ENCODE measurements at regions of chr11 and their contacts with region 1.

Region 1: GRCh38 chr11:7986768-7987559 is at the start of gene EIF3F:
- DNase-seq: peak; percentile 77 to 95 (median 94)
- H3K4me3 ChIP-seq: peak within 1 kb of the TSS; percentile 77
- H3K4me3 Mint-ChIP-seq: peak within 1 kb of the TSS; percentile 76 to 92 (median 92)
- H3K27ac ChIP-seq: peak within 1 kb of the TSS; percentile 65
- H3K27ac Mint-ChIP-seq: peak within 1 kb of the TSS; percentile 79 to 99 (median 98)
- H3K4me1 ChIP-seq: peaks cover 34% of the 10 kb centered on the region
- H3K4me1 Mint-ChIP-seq: peaks cover 47 to 55% (median 54%) of the 10 kb centered on the region in 3 donors
- H3K27me3 ChIP-seq: no peaks in the 10 kb centered on the region
- H3K27me3 Mint-ChIP-seq: peaks cover 0 to 3% of the 10 kb centered on the region in 2 donors
- total RNA-seq, gene EIF3F: 294 to 306 TPM

Region 2: DNA sequence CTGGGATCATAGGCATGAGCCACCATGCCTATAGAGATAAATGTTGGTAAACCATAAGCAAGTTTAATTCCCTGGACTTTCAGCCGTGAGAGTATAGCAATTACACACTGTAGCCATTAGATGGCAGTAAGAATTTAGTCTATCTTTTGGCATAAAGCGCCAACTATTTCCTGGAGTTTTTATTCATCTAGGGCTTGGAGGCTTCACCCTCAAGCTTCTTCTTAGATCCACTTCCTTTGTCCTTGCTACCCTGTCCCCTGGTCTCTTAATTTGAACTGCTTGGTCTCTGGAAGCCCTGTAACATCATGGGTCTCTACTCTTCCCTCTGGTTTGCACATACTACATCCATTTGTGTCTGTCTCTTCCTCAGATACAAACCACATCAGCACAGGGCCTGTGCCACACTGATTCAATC is 94.1 kb before region 1 on chr11:
- CTCF ChIA-PET with region 1: interaction called, 34 read pairs
- POLR2A ChIA-PET with region 1: interaction called, 3 read pairs
- DNase-seq: peak in 2 of 5 donors; percentile 28 to 35
- H3K4me3 ChIP-seq: no peak overlapping the region
- H3K4me3 Mint-ChIP-seq: no peak overlapping the region
- H3K27ac ChIP-seq: no peak overlapping the region
- H3K27ac Mint-ChIP-seq: peak overlapping the region in 3 of 8 donors; percentile 35 to 60 (median 55)
- H3K4me1 ChIP-seq: no peaks in the 10 kb centered on the region
- H3K4me1 Mint-ChIP-seq: peaks cover 4 to 11% (median 6%) of the 10 kb centered on the region in 3 donors
- H3K27me3 ChIP-seq: no peaks in the 10 kb centered on the region
- H3K27me3 Mint-ChIP-seq: peaks cover 0 to 4% of the 10 kb centered on the region in 2 donors

Region 3: GRCh38 chr11:8018484-8019313 is 31.7 kb after region 1 on chr11:
- CTCF ChIA-PET with region 1: interaction called, 19 read pairs
- POLR2A ChIA-PET with region 1: interaction called, 4 read pairs
- DNase-seq: peak; percentile 63 to 91 (median 76)
- H3K4me3 ChIP-seq: peak overlapping the region; percentile 50
- H3K4me3 Mint-ChIP-seq: peak overlapping the region; percentile 72 to 91 (median 83)
- H3K27ac ChIP-seq: peak overlapping the region; percentile 76
- H3K27ac Mint-ChIP-seq: peak overlapping the region; percentile 36 to 97 (median 88)
- H3K4me1 ChIP-seq: peaks cover 12% of the 10 kb centered on the region
- H3K4me1 Mint-ChIP-seq: peaks cover 14 to 15% (median 15%) of the 10 kb centered on the region in 3 donors
- H3K27me3 ChIP-seq: peaks cover 15% of the 10 kb centered on the region
- H3K27me3 Mint-ChIP-seq: peaks cover 22 to 50% of the 10 kb centered on the region in 2 donors

Measured in CD8-positive, alpha-beta memory T cell (primary cell).